Uterus (tissue), 4 donors: ENCODE measurements at regions of chr1 and their contacts with region 1.

Region 1: GRCh38 chr1:6359216-6360116 is 34.1 kb downstream of the ACOT7 start:
- DNase-seq: peak; percentile 73 to 76
- H3K4me3 ChIP-seq: no peak overlapping the region
- H3K27ac ChIP-seq: peak overlapping the region; percentile 73 to 81
- H3K4me1 ChIP-seq: peaks cover 0 to 19% of the 10 kb centered on the region in 2 donors
- H3K27me3 ChIP-seq: no peaks in the 10 kb centered on the region
- CTCF ChIP-seq: no peak
- POLR2A ChIP-seq: peak in 1 of 2 donors; percentile 30

Region 2: DNA sequence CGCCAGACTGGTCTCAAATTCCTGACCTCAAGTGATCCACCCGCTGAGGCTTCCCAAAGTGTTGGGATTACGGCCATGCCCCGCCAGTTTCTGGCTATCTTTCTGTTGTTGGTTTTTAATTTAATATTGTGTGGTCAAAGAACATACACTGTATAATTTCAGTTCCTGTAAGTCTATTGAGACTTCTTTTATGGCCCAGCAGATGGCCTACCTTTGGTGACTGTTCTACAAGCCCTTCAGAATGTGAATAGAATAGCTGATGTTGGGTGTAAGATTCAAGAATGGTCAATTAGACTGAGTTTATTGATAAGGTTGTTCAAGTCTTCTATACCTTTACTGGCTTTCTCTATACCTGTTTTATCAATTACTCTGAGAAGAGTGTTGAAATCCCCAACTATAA is 49.6 kb after region 1 on chr1:
- intact Hi-C with region 1: loop called (anchors 5 kb)
- DNase-seq: no peak
- H3K4me3 ChIP-seq: no peak overlapping the region
- H3K27ac ChIP-seq: no peak overlapping the region
- H3K4me1 ChIP-seq: no peaks in the 10 kb centered on the region
- H3K27me3 ChIP-seq: peaks cover 0 to 4% of the 10 kb centered on the region in 2 donors
- CTCF ChIP-seq: no peak
- POLR2A ChIP-seq: no peak